ENCODE measurements at regions of chr2 and their contacts with region 1.

Region 1: DNA sequence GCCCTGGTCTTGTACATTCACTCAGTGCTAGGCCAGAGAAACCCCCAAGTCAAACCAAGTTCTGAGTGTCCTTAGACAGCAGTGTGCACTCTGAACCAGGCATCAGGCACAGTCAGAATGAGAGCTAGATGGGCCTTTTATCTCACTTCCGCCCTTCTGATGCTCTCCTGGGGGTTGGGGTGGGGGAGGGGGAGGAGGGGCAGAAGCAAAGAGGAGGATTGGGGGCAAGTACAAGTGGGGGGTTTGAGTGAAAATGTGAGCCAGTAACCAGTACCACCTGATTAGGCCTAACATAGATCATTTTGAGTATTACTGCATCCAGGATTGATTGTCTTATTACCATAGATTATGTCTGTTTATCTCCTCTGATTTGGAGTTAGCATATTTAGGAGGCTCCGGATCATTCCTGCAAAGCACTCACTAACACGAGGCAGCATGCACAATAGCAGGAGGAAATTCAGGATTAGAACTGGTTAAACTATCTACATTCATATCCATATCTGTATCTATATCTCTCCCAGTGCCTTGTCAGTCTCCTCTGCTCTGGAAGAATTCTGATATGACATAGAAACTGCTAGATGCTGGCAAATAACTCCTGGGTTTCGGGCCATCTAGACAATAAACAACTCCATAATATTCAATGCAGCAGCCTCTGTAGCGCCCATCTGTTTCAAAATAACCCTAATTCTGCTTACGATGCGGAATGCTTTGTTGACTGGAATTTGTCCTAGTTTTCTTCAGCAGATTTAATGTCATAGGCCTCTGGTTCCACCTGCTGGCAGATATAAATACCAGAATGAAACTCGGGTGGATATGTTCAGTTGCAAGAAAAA is 149.1 kb downstream of the RHBDD1 start:
- DNase-seq: peak; percentile 61
- H3K4me3 ChIP-seq: no peak overlapping the region
- H3K27ac ChIP-seq: no peak overlapping the region
- H3K4me1 ChIP-seq: no peaks in the 10 kb centered on the region
- H3K27me3 ChIP-seq: no peaks in the 10 kb centered on the region
- CTCF ChIP-seq: peak; percentile 57 to 79 (median 78)
- POLR2A ChIP-seq: no peak

Region 2: GRCh38 chr2:225670111-225670974 is 1314.6 kb before region 1 on chr2:
- intact Hi-C with region 1: loop called (anchors 2 kb)
- DNase-seq: no peak
- H3K4me3 ChIP-seq: no peak overlapping the region
- H3K27ac ChIP-seq: no peak overlapping the region
- H3K4me1 ChIP-seq: no peaks in the 10 kb centered on the region
- H3K27me3 ChIP-seq: no peaks in the 10 kb centered on the region
- CTCF ChIP-seq: peak in 3 of 4 experiments; percentile 35 to 56 (median 36)
- POLR2A ChIP-seq: no peak

Measured in prostate gland (tissue), 2 donors.